ENCODE measurements at regions of chr2 and their contacts with region 1.

Region 1: DNA sequence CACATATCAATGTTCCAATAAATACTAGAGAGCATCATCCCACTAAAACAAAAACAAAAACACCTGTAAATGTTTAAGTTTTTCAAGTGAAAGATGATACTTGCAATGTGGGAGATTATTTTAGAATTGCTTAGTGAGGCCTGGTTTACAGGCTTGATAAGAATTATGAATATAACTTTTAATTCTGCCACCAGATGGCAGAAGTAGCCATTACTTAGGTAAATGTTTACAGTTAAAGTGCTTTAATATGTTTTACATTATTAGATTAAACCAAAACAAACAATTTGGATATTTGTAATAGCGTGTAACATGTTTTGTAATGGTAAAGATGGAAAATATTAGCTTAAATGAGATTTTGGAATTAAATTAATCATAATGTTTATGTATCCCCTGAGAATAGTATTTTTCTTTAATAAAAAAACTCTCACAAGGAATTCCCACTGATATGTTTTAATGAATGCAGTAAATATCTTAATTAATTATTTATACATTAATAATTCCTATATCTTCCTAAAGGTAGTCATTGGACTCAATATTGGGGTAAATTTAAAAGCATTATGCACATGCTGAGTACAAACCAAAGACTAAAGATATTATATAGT is 522.0 kb downstream of the SPAG16 start:
- DNase-seq: peak; percentile 31
- H3K4me3 ChIP-seq: no peak overlapping the region
- H3K27ac ChIP-seq: no peak overlapping the region
- H3K4me1 ChIP-seq: no peaks in the 10 kb centered on the region
- CTCF ChIP-seq: peak; percentile 79

Region 2: DNA sequence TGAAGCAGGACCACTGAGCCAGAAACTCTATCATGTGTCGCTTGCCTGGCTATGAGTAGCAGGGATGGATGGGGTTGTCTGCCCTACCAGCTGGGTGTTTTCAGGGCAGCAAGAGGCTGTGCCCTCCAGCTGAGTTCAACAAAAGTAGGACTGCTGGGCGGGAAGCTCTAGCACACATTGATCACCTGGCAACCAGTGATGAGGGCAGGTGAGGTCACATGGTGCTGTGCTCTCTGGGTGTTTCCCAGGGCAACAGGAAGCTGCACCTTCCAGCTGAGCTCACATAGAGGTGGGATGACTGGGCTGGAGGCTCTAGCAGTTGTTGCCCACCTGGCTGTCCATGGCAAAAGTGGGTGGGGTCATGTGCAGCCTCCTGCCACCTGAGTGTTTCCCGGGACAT is 117.3 kb after region 1 on chr2:
- CTCF ChIA-PET with region 1: no interaction called
- POLR2A ChIA-PET with region 1: no interaction called
- intact Hi-C with region 1: no loop called
- DNase-seq: no peak
- H3K4me3 ChIP-seq: no peak overlapping the region
- H3K27ac ChIP-seq: no peak overlapping the region
- H3K4me1 ChIP-seq: no peaks in the 10 kb centered on the region
- CTCF ChIP-seq: no peak

Region 3: GRCh38 chr2:215002500-215002899 is 1196.3 kb after region 1 on chr2:
- CTCF ChIA-PET with region 1: no interaction called
- POLR2A ChIA-PET with region 1: no interaction called
- intact Hi-C with region 1: loop called (anchors 10 kb)
- DNase-seq: peak; percentile 74
- H3K4me3 ChIP-seq: no peak overlapping the region
- H3K27ac ChIP-seq: no peak overlapping the region
- H3K4me1 ChIP-seq: peaks cover 14% of the 10 kb centered on the region
- CTCF ChIP-seq: peak; percentile 91